Dorsolateral prefrontal cortex (tissue), 120 donors: ENCODE measurements at regions of chr11 and their contacts with region 1.

Region 1: GRCh38 chr11:6576471-6577373 is 26.7 kb downstream of the RRP8 start:
- DNase-seq: peak in 8 of 10 donors; percentile 31 to 90 (median 76)
- H3K4me3 ChIP-seq: peak overlapping the region in 4 of 59 donors; percentile 3 to 17 (median 10)
- H3K27ac ChIP-seq: peak overlapping the region; percentile 29 to 90 (median 81)
- H3K27me3 ChIP-seq: no peaks in the 10 kb centered on the region
- CTCF ChIP-seq: peak in 4 of 56 donors; percentile 20 to 45 (median 26)

Region 2: DNA sequence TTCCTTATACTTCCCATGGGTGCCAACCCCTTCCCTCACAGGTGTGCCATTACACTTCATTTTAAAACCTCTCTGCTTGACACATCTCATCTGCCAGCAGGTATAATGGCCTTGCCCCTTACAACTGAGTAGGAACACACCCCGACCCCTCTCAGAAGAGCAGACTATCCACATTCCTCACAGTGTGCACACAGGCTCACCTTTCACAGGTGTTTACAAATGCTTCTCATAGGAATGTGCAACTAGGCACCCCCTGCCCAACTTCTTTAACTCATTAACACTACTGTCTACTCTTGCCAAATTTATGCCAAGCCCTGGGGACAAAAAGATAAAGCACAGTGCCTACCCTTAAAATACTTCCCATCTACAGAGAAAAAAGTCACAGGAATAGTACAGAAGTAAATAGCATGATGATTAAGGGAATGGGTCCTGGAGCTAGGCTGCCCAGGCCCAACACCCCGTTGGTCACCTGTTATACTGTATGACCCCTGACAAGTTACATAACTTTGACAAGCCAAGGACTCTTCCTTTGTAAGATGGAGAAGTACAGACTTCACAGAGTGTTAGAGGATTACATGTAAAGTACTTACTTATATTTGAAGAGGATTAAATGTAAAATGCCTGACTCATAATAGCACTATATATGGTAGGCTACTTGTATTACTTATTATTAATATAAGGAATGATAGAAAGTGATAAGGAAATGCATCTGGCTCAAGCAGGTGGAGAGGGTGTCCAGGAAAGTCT is 118.2 kb before region 1 on chr11:
- intact Hi-C with region 1: no loop called
- DNase-seq: no peak
- H3K4me3 ChIP-seq: no peak overlapping the region
- H3K27ac ChIP-seq: no peak overlapping the region
- H3K27me3 ChIP-seq: no peaks in the 10 kb centered on the region
- CTCF ChIP-seq: no peak

Region 3: DNA sequence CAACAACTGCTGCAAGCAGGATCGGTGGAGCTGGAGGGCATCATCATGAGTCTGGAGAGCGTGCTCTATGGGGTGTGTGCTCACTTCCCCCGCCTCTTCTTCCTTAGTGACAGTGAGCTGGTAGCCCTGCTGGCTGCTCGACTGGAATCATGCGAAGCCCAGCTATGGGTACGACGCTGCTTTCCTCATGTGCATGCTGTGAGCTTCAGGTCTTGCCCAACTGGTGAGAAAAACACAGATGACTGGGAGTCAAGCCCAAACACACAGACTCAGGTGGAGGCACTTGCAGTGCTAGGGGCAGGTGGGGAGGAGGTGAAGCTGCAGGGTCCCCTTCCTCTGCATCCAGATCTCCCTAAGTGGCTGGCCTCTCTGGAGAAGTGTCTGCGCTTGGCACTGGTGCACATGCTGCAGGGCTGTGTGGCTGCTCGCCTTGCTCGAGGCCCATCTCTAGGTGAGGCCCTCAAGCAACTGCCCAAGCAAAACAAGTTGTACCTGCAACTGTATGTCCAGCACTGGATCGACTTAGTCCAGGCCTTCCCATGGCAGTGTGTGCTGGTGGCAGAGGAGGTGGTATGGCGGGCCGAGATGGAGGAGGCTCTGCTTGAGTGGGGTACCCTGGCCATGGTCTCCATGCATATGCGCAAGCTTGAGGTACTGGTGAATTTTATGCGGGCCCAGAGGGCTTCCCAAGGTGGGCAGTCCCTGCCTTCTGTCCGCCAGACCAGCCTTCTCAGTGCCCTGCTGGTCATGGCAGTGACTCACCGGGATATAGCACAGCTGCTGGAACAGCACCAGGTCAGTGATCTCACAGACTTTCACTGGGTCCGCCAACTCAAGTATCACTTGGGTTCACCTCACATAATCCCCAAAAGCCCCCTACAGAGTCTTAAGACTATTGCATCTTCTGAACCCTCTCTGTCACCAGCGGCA is 31.5 kb before region 1 on chr11:
- intact Hi-C with region 1: loop called in 1 of 2 experiments (anchors 5 kb)
- DNase-seq: peak in 1 of 10 donors; percentile 38
- H3K4me3 ChIP-seq: no peak overlapping the region
- H3K27ac ChIP-seq: peak overlapping the region in 40 of 59 donors; percentile 6 to 85 (median 65)
- H3K27me3 ChIP-seq: no peaks in the 10 kb centered on the region
- CTCF ChIP-seq: no peak